ENCODE measurements at regions of chr21 and their contacts with region 1.

Region 1: DNA sequence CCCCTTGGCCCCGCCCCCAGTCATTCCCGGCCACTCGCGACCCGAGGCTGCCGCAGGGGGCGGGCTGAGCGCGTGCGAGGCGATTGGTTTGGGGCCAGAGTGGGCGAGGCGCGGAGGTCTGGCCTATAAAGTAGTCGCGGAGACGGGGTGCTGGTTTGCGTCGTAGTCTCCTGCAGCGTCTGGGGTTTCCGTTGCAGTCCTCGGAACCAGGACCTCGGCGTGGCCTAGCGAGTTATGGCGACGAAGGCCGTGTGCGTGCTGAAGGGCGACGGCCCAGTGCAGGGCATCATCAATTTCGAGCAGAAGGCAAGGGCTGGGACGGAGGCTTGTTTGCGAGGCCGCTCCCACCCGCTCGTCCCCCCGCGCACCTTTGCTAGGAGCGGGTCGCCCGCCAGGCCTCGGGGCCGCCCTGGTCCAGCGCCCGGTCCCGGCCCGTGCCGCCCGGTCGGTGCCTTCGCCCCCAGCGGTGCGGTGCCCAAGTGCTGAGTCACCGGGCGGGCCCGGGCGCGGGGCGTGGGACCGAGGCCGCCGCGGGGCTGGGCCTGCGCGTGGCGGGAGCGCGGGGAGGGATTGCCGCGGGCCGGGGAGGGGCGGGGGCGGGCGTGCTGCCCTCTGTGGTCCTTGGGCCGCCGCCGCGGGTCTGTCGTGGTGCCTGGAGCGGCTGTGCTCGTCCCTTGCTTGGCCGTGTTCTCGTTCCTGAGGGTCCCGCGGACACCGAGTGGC is at the start of gene SOD1:
- DNase-seq: peak; percentile 85
- ATAC-seq: peak; percentile 95
- H3K4me3 ChIP-seq: peak within 1 kb of the TSS; percentile 77 to 91 (median 88)
- H3K27ac ChIP-seq: peak within 1 kb of the TSS; percentile 83
- H3K4me1 ChIP-seq: peaks cover 62% of the 10 kb centered on the region
- H3K27me3 ChIP-seq: no peaks in the 10 kb centered on the region
- CTCF ChIP-seq: peak; percentile 15; the same call in 1 of the 2 replicates
- EP300 ChIP-seq: no peak
- POLR2A ChIP-seq: peak; percentile 99 to 100
- RAD21 ChIP-seq: no peak
- total RNA-seq, gene SOD1: 537 and 796 TPM in 2 replicates

Region 2: DNA sequence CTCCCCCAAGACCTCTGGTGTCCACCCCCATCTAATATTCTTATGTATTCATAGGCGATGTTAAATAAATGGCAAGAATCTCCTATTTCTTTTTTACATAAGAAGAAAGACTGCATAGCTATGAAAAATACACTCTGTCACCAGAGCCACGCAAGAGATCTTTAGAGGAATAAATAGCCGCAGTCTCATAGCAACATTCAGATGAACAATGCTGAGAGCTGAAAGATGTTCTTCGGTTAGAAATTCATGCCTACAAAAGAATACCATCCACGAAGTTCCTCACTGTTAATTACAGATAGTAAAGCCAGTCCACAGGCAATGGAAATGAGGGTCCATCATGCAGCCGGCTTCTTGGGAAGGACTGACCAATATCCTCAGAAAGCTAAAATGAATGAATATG is 76.2 kb before region 1 on chr21:
- CTCF ChIA-PET with region 1: no interaction called
- POLR2A ChIA-PET with region 1: no interaction called
- in situ Hi-C with region 1: no loop called
- intact Hi-C with region 1: no loop called
- DNase-seq: no peak
- ATAC-seq: no peak
- H3K4me3 ChIP-seq: no peak overlapping the region
- H3K27ac ChIP-seq: no peak overlapping the region
- H3K4me1 ChIP-seq: no peaks in the 10 kb centered on the region
- H3K27me3 ChIP-seq: 0 out of 5 replicates have a peak, but pooled peaks cover 0 to 3% of the 10 kb centered on the region in 2 experiments
- CTCF ChIP-seq: no peak
- EP300 ChIP-seq: no peak
- POLR2A ChIP-seq: no peak
- RAD21 ChIP-seq: no peak

Region 3: GRCh38 chr21:31713973-31714740 is 54.5 kb after region 1 on chr21:
- CTCF ChIA-PET with region 1: no interaction called
- POLR2A ChIA-PET with region 1: no interaction called
- in situ Hi-C with region 1: no loop called
- intact Hi-C with region 1: loop called (anchors 10 kb)
- DNase-seq: no peak
- ATAC-seq: no peak
- H3K4me3 ChIP-seq: no peak overlapping the region
- H3K27ac ChIP-seq: no peak overlapping the region
- H3K4me1 ChIP-seq: peaks cover 61% of the 10 kb centered on the region
- H3K27me3 ChIP-seq: no peaks in the 10 kb centered on the region
- CTCF ChIP-seq: no peak
- EP300 ChIP-seq: no peak
- POLR2A ChIP-seq: no peak
- RAD21 ChIP-seq: no peak

Region 4: DNA sequence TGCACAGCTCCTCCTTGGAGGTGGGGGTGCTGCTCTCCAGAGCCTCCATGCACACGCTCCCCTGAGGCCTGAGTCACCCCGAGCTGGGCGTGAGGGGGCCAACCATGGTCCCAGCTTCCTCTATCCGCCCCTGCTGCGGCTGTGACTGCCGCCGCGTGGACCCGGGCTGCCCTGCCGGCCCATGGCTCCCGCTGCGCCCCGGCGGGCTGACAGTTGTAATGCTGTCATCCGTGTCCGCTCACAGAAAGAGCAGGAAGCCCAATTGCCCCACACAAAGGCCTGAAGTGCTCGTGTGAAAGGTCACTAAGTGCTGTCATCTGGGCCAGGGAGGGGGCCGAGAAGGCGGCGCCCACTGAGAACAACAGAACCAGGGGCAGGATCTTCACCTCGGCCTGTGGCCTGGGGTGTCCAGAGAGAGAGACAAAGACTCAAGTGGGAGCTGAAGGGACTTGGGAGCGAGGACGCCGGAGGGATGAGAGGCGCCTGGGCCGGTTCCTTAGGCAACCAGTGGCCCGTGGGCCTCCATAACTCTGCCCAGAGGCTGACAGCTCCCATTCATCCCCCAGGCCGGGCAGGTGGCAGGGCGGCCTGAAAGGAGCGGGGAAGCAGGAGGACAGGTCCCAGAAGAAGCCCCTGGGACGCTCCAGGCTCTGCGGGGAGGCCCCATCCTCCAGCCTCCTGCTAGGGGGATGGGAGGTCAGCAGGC is 1441.8 kb after region 1 on chr21:
- CTCF ChIA-PET with region 1: no interaction called
- POLR2A ChIA-PET with region 1: no interaction called
- in situ Hi-C with region 1: no loop called
- intact Hi-C with region 1: no loop called
- DNase-seq: no peak
- ATAC-seq: no peak
- H3K4me3 ChIP-seq: no peak overlapping the region
- H3K27ac ChIP-seq: no peak overlapping the region
- H3K4me1 ChIP-seq: no peaks in the 10 kb centered on the region
- H3K27me3 ChIP-seq: peaks cover 7 to 59% of the 10 kb centered on the region in 2 experiments
- CTCF ChIP-seq: no peak
- EP300 ChIP-seq: no peak
- POLR2A ChIP-seq: no peak
- RAD21 ChIP-seq: no peak

Measured in HepG2 (cell line).